ENCODE measurements at regions of chr10 and their contacts with region 1.

Region 1: DNA sequence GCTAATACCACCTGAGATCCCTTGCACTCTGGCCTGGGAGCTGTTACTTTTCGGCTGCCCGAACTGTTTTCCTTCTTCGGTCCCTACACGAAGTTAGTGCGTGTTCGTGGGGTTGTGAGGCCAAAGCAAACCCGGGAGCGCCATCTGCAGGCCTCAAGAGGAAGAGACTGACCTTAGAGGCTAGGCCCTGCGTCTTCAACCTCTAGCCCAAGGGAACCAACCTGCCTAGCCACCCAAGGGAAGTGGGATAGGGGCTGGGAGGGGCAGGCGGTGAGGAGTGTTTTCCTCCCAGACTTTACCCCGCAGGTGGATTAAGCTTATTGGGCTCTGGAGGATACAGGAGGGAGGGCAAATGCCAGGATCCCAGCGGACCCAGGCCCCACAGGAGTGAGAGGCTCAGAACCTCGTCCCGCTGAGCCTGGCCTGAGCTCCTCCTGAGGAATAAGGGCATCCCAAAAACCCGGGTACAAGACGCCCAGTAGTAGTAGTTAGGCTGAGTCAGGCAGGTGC is 1.7 kb upstream of the PAX2 start:
- DNase-seq: no peak
- H3K4me3 ChIP-seq: peak overlapping the region in 1 of 4 experiments; percentile 57; a peak in 3 of 8 replicates
- H3K27ac ChIP-seq: no peak overlapping the region
- H3K4me1 ChIP-seq: peaks cover 0 to 33% (median 26%) of the 10 kb centered on the region in 4 experiments; a peak in 6 of 7 replicates
- H3K27me3 ChIP-seq: peaks cover 79 to 94% (median 92%) of the 10 kb centered on the region in 4 experiments
- CTCF ChIP-seq: peak; percentile 70 to 84 (median 83)
- EP300 ChIP-seq: no peak
- POLR2A ChIP-seq: no peak
- RAD21 ChIP-seq: peak; percentile 80

Region 2: DNA sequence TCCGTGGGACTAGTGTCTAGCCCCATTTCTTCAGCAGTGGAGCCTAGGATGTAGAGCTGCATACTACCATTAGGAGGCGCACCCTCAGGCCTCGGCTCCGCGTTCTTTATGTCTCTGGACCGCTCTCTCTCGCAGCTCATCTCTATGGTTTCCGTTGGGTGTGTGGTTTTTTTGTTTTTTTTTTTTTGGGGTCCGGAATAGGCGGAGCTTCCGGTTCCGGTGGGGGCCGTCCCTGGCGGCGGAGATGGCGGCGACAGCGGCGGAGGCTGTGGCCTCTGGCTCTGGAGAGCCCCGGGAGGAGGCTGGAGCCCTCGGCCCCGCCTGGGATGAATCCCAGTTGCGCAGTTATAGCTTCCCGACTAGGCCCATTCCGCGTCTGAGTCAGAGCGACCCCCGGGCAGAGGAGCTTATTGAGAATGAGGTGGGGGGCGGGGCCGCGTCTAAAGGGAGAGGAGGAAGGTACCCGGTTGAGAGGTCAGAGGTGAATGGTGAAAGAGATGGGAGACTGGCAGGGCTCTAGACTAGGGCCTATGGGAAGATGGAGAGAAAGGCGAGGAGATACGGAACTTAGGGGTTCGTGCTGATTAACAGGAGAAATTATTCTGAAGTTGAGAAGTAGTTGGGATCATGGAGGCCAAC is 207.8 kb before region 1 on chr10 and contains the start of gene HIF1AN:
- CTCF ChIA-PET with region 1: interaction called, 16 read pairs
- POLR2A ChIA-PET with region 1: no interaction called
- DNase-seq: peak; percentile 84 to 87
- H3K4me3 ChIP-seq: peak within 1 kb of the TSS; percentile 59 to 94 (median 91)
- H3K27ac ChIP-seq: no peak within 1 kb of the TSS
- H3K4me1 ChIP-seq: peaks cover 0 to 9% (median 5%) of the 10 kb centered on the region in 4 experiments; a peak in 5 of 7 replicates
- H3K27me3 ChIP-seq: no peaks in the 10 kb centered on the region
- CTCF ChIP-seq: peak; percentile 90 to 94 (median 91)
- EP300 ChIP-seq: no peak
- POLR2A ChIP-seq: peak; percentile 77 to 90
- RAD21 ChIP-seq: peak in 1 of 2 experiments; percentile 4; a peak in 1 of 4 replicates
- total RNA-seq, gene HIF1AN: 59.7 and 62.8 TPM in 2 replicates

Region 3: DNA sequence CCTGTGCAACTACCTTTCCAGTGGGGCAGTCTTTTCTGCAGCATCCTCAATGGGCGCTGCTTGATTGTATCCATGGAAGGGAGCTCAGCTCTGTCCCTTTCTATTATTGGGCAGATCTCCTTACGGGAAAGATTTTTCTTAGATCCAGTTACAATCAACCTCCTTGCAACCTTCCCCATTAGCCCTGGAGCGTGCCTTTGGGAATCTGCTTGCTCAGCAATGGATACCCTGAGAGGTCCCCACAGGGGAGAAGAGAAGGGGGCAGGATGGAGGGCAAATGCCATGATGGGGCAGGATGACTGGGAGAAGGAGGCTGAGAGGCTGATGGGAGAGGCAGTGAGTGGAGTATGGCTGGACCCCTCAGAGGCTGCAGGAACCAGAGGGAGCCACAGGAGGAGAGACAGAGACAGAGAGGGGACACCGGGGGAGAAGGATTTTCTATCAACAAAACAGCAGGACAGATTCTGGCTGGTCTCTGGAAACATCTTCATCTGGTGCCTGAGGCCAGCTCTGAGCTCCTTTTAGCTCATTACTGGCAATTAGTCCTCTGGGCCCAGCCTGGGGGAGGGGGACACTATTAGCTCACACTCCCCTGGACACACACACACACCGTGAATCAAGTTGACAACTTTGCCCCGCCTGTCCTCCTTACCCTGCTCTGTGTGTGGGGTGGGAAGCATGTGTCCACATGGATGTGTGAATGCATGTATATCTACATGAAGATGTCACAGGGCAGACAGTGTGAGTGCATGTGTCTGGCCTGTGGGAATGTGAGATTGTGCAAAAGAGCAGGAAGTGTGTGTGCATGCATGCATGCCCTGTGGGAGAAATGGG is 79.1 kb before region 1 on chr10:
- CTCF ChIA-PET with region 1: interaction called, 16 read pairs
- POLR2A ChIA-PET with region 1: interaction called, 4 read pairs
- DNase-seq: no peak
- H3K4me3 ChIP-seq: no peak overlapping the region
- H3K27ac ChIP-seq: no peak overlapping the region
- H3K4me1 ChIP-seq: peaks cover 6 to 18% (median 13%) of the 10 kb centered on the region in 4 experiments
- H3K27me3 ChIP-seq: peaks cover 15 to 37% (median 32%) of the 10 kb centered on the region in 4 experiments
- CTCF ChIP-seq: no peak
- EP300 ChIP-seq: no peak
- POLR2A ChIP-seq: no peak
- RAD21 ChIP-seq: no peak

Region 4: GRCh38 chr10:100710151-100710871 is 33.4 kb before region 1 on chr10:
- CTCF ChIA-PET with region 1: interaction called, 44 read pairs
- POLR2A ChIA-PET with region 1: interaction called, 7 read pairs
- DNase-seq: peak in 1 of 2 experiments; percentile 61
- H3K4me3 ChIP-seq: peak overlapping the region; percentile 22 to 60 (median 34); a peak in 6 of 8 replicates
- H3K27ac ChIP-seq: no peak overlapping the region
- H3K4me1 ChIP-seq: peaks cover 0 to 9% (median 4%) of the 10 kb centered on the region in 4 experiments; a peak in 5 of 7 replicates
- H3K27me3 ChIP-seq: peaks cover 66 to 79% (median 76%) of the 10 kb centered on the region in 4 experiments
- CTCF ChIP-seq: no peak
- EP300 ChIP-seq: no peak
- POLR2A ChIP-seq: no peak
- RAD21 ChIP-seq: no peak

Region 5: GRCh38 chr10:100775386-100775785 is 31.7 kb after region 1 on chr10:
- CTCF ChIA-PET with region 1: interaction called, 15 read pairs
- POLR2A ChIA-PET with region 1: no interaction called
- DNase-seq: no peak
- H3K4me3 ChIP-seq: no peak overlapping the region
- H3K27ac ChIP-seq: no peak overlapping the region
- H3K4me1 ChIP-seq: peaks cover 3 to 10% (median 9%) of the 10 kb centered on the region in 4 experiments; a peak in 5 of 7 replicates
- H3K27me3 ChIP-seq: peaks cover 0 to 8% (median 0%) of the 10 kb centered on the region in 4 experiments; a peak in 2 of 7 replicates
- CTCF ChIP-seq: no peak
- EP300 ChIP-seq: no peak
- POLR2A ChIP-seq: no peak
- RAD21 ChIP-seq: no peak

Region 6: GRCh38 chr10:100872034-100872791 is 128.5 kb after region 1 on chr10:
- CTCF ChIA-PET with region 1: interaction called, 57 read pairs
- POLR2A ChIA-PET with region 1: no interaction called
- DNase-seq: peak; percentile 27 to 92
- H3K4me3 ChIP-seq: no peak overlapping the region
- H3K27ac ChIP-seq: no peak overlapping the region
- H3K4me1 ChIP-seq: peaks cover 0 to 12% (median 7%) of the 10 kb centered on the region in 4 experiments; a peak in 5 of 7 replicates
- H3K27me3 ChIP-seq: peaks cover 0 to 29% (median 17%) of the 10 kb centered on the region in 4 experiments; a peak in 6 of 7 replicates
- CTCF ChIP-seq: peak; percentile 69 to 86 (median 84)
- EP300 ChIP-seq: no peak
- POLR2A ChIP-seq: no peak
- RAD21 ChIP-seq: peak; percentile 84 to 85